PC-3 (cell line): ENCODE measurements at regions of chr2 and their contacts with region 1.

Region 1: GRCh38 chr2:31170071-31170698 is 31.9 kb upstream of the GALNT14 start:
- DNase-seq: peak; percentile 72
- ATAC-seq: peak; percentile 90
- H3K4me3 ChIP-seq: no peak overlapping the region
- H3K27ac ChIP-seq: no peak overlapping the region
- H3K4me1 ChIP-seq: no peaks in the 10 kb centered on the region
- H3K27me3 ChIP-seq: peaks cover 7% of the 10 kb centered on the region; the same call in 1 of the 2 replicates
- CTCF ChIP-seq: peak; percentile 91

Region 2: GRCh38 chr2:29361231-29361630 is 1809.0 kb before region 1 on chr2:
- CTCF ChIA-PET with region 1: no interaction called
- POLR2A ChIA-PET with region 1: no interaction called
- intact Hi-C with region 1: no loop called
- DNase-seq: peak; percentile 51
- ATAC-seq: peak; percentile 40; the same call in 1 of the 2 replicates
- H3K4me3 ChIP-seq: no peak overlapping the region
- H3K27ac ChIP-seq: no peak overlapping the region
- H3K4me1 ChIP-seq: no peaks in the 10 kb centered on the region
- H3K27me3 ChIP-seq: no peaks in the 10 kb centered on the region
- CTCF ChIP-seq: no peak

Region 3: GRCh38 chr2:30862054-30862651 is 308.0 kb before region 1 on chr2:
- CTCF ChIA-PET with region 1: interaction called, 4 read pairs
- POLR2A ChIA-PET with region 1: no interaction called
- intact Hi-C with region 1: loop called (anchors 1 kb)
- DNase-seq: peak; percentile 84
- ATAC-seq: peak; percentile 46
- H3K4me3 ChIP-seq: no peak overlapping the region
- H3K27ac ChIP-seq: no peak overlapping the region
- H3K4me1 ChIP-seq: no peaks in the 10 kb centered on the region
- H3K27me3 ChIP-seq: no peaks in the 10 kb centered on the region
- CTCF ChIP-seq: peak; percentile 69

Region 4: GRCh38 chr2:31097962-31098613 is 72.1 kb before region 1 on chr2:
- CTCF ChIA-PET with region 1: no interaction called
- POLR2A ChIA-PET with region 1: no interaction called
- intact Hi-C with region 1: no loop called
- DNase-seq: peak; percentile 31
- ATAC-seq: no peak; the same call in 1 of the 2 replicates
- H3K4me3 ChIP-seq: no peak overlapping the region
- H3K27ac ChIP-seq: no peak overlapping the region
- H3K4me1 ChIP-seq: no peaks in the 10 kb centered on the region
- H3K27me3 ChIP-seq: no peaks in the 10 kb centered on the region
- CTCF ChIP-seq: no peak

Region 5: GRCh38 chr2:31151501-31151900 is 18.7 kb before region 1 on chr2:
- CTCF ChIA-PET with region 1: interaction called, 10 read pairs
- POLR2A ChIA-PET with region 1: no interaction called
- intact Hi-C with region 1: no loop called
- DNase-seq: peak; percentile 30
- ATAC-seq: peak; percentile 67
- H3K4me3 ChIP-seq: no peak overlapping the region
- H3K27ac ChIP-seq: no peak overlapping the region
- H3K4me1 ChIP-seq: no peaks in the 10 kb centered on the region
- H3K27me3 ChIP-seq: peaks cover 27% of the 10 kb centered on the region; the same call in 1 of the 2 replicates
- CTCF ChIP-seq: peak; percentile 53